Adrenal gland (tissue), 19 donors: ENCODE measurements at regions of chr10 and their contacts with region 1.

Region 1: GRCh38 chr10:73644015-73644743 is 2.9 kb upstream of the MYOZ1 start:
- DNase-seq: peak; percentile 43 to 84 (median 62)
- H3K4me3 ChIP-seq: no peak overlapping the region
- H3K27ac ChIP-seq: no peak overlapping the region
- H3K4me1 ChIP-seq: peaks cover 0 to 12% of the 10 kb centered on the region in 2 donors
- H3K27me3 ChIP-seq: no peaks in the 10 kb centered on the region
- CTCF ChIP-seq: peak; percentile 73 to 98 (median 93)
- POLR2A ChIP-seq: no peak

Region 2: GRCh38 chr10:73529089-73529832 is 114.9 kb before region 1 on chr10:
- intact Hi-C with region 1: loop called (anchors 2 to 5 kb)
- DNase-seq: peak; percentile 43 to 74 (median 66)
- H3K4me3 ChIP-seq: no peak overlapping the region
- H3K27ac ChIP-seq: no peak overlapping the region
- H3K4me1 ChIP-seq: no peaks in the 10 kb centered on the region
- H3K27me3 ChIP-seq: no peaks in the 10 kb centered on the region
- CTCF ChIP-seq: peak; percentile 85 to 91 (median 86)
- POLR2A ChIP-seq: no peak

Region 3: GRCh38 chr10:73534857-73535256 is 109.3 kb before region 1 on chr10:
- intact Hi-C with region 1: loop called in 1 of 2 experiments (anchors 5 kb)
- DNase-seq: no peak
- H3K4me3 ChIP-seq: no peak overlapping the region
- H3K27ac ChIP-seq: no peak overlapping the region
- H3K4me1 ChIP-seq: no peaks in the 10 kb centered on the region
- H3K27me3 ChIP-seq: no peaks in the 10 kb centered on the region
- CTCF ChIP-seq: no peak
- POLR2A ChIP-seq: no peak